ENCODE measurements at regions of chr7 and their contacts with region 1.

Region 1: GRCh38 chr7:107286751-107287621 is 118.2 kb downstream of the HBP1 start:
- DNase-seq: peak in 1 of 2 donors; percentile 42
- ATAC-seq: peak; percentile 52 to 85 (median 68)
- H3K4me3 ChIP-seq: no peak overlapping the region
- H3K27ac ChIP-seq: peak overlapping the region; percentile 48 to 83 (median 70)
- H3K4me1 ChIP-seq: peaks cover 0 to 24% (median 14%) of the 10 kb centered on the region in 9 donors
- H3K27me3 ChIP-seq: no peaks in the 10 kb centered on the region
- CTCF ChIP-seq: no peak

Region 2: GRCh38 chr7:107213193-107213788 is 73.7 kb before region 1 on chr7:
- intact Hi-C with region 1: loop called in 1 of 10 experiments (anchors 10 kb)
- DNase-seq: peak; percentile 33 to 55
- ATAC-seq: peak; percentile 61 to 86 (median 74)
- H3K4me3 ChIP-seq: no peak overlapping the region
- H3K27ac ChIP-seq: peak overlapping the region in 6 of 10 donors; percentile 6 to 45 (median 40)
- H3K4me1 ChIP-seq: peaks cover 0 to 20% (median 6%) of the 10 kb centered on the region in 9 donors
- H3K27me3 ChIP-seq: no peaks in the 10 kb centered on the region
- CTCF ChIP-seq: peak in 1 of 9 donors; percentile 14

Region 3: DNA sequence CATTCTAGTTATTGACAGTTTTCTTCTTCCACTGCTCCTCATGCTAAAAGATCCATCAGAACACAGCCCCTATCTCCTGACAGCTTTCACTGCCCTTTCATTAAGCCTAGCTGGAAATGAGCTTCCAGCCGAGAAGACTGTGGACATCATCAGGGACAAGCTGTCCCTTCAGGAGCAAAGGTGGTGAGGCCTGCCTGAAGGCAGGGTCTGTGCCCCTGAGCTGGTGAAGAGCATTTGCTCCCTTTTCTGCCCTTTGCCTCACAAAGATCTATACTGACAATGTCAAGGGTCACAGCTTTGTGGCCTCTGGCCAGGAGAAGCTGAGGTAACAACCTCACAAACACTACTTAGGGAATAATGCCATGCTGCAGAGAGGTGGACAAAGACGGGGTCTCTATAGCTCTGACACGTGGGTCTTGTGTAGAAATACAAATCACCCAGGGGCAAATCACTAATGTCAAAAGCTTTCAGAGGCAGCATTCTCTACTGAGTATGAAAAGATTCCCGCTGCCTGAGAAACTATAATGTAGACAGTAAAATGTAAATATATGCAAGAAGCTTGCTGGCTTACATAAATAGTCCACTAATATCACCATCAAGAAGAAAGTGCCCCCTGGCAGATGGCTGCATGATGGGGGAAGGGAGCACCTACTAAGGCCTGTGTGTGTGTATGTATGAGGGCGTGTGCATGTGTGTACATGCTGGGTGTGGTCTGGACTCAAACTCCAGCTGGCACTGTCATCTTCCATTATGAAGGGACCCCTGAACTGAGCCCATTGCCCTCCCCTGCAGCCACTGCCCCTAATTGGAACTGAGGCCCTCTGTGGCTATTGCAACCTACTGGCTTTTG is 62.4 kb before region 1 on chr7:
- intact Hi-C with region 1: loop called in 5 of 10 experiments (anchors 5 to 10 kb)
- DNase-seq: no peak
- ATAC-seq: peak in 2 of 8 donors; percentile 21 to 51
- H3K4me3 ChIP-seq: no peak overlapping the region
- H3K27ac ChIP-seq: peak overlapping the region in 9 of 10 donors; percentile 39 to 87 (median 72)
- H3K4me1 ChIP-seq: peaks cover 0 to 33% (median 7%) of the 10 kb centered on the region in 9 donors
- H3K27me3 ChIP-seq: no peaks in the 10 kb centered on the region
- CTCF ChIP-seq: no peak

Region 4: DNA sequence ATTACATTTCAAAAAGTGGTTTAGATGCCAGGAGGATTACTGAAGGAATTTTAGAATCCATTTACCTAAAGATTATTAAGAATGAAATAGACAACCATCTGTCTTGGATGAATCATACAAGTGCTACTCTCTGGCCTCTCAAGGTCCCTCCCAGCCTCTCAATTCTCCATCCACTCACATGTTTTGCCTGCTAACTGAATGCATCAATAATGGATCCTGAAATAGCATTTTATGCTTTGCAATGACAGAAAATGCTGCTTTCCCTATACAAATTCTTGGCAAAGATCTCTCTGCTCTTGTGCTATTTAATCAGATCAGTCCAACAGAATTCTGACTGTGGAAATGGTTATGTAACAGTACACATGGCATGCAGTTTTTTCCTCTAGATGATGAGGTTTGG is 50.1 kb before region 1 on chr7:
- intact Hi-C with region 1: loop called in 1 of 10 experiments (anchors 5 kb)
- DNase-seq: no peak
- ATAC-seq: no peak
- H3K4me3 ChIP-seq: no peak overlapping the region
- H3K27ac ChIP-seq: peak overlapping the region in 7 of 10 donors; percentile 15 to 64 (median 51)
- H3K4me1 ChIP-seq: peaks cover 0 to 26% (median 7%) of the 10 kb centered on the region in 9 donors
- H3K27me3 ChIP-seq: no peaks in the 10 kb centered on the region
- CTCF ChIP-seq: no peak

Region 5: DNA sequence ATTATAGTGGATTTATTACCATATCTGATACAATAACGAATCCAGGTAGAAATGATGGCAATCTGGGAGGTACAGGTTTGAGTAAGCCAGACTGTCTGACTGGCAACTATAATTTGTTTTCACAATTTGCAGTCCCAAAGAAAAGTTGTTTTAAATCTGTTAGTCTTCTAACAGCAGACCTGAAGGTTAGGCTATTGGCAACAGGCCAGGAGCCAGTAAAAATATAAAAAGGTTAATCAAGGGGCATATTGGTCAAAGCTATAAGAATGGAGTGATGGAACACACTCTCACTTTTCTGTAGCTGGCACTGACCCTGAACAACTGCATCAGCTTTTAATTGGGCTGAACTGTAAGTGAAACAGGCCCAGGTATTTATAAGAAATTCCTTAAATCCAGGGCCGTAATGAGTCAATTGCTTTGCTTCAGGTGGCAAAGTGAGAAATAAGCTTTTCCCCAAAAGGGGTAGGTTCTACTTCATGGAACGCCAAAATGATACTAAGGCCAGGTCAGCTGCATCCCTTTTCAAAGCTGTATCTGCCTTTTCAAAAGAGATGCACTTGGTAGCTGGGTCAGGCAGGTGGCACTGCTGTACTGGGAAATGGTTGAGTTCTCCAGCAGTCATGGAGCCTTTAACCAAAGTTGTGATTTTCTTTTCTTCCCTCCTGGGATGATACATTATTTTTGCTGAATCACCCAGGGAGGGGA is 175.9 kb after region 1 on chr7:
- intact Hi-C with region 1: loop called in 2 of 10 experiments (anchors 5 to 10 kb)
- DNase-seq: peak; percentile 46 to 61
- ATAC-seq: peak; percentile 75 to 96 (median 90)
- H3K4me3 ChIP-seq: no peak overlapping the region
- H3K27ac ChIP-seq: peak overlapping the region in 7 of 10 donors; percentile 8 to 65 (median 51)
- H3K4me1 ChIP-seq: peaks cover 0 to 39% (median 5%) of the 10 kb centered on the region in 9 donors
- H3K27me3 ChIP-seq: no peaks in the 10 kb centered on the region
- CTCF ChIP-seq: peak; percentile 54 to 91 (median 73)

Region 6: DNA sequence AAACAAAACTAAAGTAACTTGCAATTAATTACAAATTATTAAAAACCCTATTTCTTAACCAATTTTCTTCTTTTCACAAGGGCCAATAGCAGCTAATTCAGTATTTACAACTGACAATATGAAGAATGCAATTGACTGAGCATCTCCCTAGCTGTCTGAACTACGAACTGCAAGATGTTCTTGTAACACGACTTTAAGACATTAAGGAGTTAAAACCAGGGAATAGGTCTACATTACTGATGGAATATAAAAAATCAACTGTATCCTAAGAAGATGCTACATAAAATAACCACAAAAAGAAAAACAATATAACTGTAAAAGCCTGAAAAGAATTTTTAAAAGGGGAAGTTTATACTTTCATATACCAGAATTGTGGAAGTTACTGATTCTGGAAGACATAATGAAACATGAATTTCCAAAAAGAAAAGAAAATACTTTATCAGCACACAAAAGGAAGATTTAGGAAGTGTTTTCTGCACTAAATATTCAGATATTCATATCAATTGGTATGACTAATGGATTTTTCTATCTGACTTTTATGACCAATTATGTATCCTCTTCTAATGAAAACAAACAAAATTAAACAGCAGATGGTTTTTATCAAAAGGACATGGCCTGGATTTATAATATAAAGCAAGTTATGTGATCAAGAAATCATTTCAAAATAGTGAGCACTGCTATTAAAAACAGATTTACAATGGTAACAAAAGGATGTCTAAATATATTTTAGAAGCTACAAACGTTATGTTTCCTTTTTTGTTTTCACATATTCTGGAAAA is 184.5 kb after region 1 on chr7:
- intact Hi-C with region 1: loop called in 2 of 10 experiments (anchors 5 to 10 kb)
- DNase-seq: no peak
- ATAC-seq: peak in 3 of 8 donors; percentile 58 to 70 (median 62)
- H3K4me3 ChIP-seq: peak overlapping the region; percentile 5 to 49 (median 34)
- H3K27ac ChIP-seq: peak overlapping the region; percentile 46 to 86 (median 78)
- H3K4me1 ChIP-seq: peaks cover 0 to 17% (median 0%) of the 10 kb centered on the region in 9 donors
- H3K27me3 ChIP-seq: no peaks in the 10 kb centered on the region
- CTCF ChIP-seq: peak in 3 of 9 donors; percentile 33 to 40 (median 37)

Measured in heart right ventricle (tissue), 16 donors.